Endothelial cell of umbilical vein (primary cell): ENCODE measurements at regions of chr5 and their contacts with region 1.

Region 1: DNA sequence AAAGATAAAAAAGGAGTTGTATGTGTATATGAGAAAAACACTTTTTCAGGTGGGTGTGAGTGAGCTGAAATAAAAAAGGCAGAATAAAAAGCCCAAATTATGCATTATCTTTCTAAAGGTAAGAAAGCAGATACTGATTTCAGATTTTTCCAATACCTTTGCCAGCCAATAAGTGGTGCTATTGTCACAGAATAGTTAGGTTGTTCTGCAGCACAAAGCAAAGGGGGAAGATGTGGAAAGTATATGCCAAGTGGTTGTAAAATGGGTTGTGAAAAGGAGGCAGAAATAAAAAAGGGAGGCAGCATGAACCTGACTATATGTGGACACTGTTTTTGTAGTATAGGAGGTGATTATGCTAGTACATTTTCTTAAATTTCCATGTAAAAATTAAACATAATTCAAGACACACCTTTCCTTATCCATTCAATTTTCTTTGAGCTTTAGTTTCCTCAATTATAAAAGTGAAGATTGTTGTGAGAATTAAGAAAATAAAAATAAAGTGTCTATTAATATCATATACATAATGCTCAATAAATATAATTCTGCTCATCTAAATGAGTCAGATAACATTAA is 106.7 kb downstream of the SMIM15 start:
- DNase-seq: peak; percentile 66
- H3K4me3 ChIP-seq: no peak overlapping the region
- H3K27ac ChIP-seq: no peak overlapping the region
- H3K4me1 ChIP-seq: peaks cover 13% of the 10 kb centered on the region
- H3K27me3 ChIP-seq: no peaks in the 10 kb centered on the region
- CTCF ChIP-seq: peak; percentile 50 to 54
- POLR2A ChIP-seq: no peak

Region 2: DNA sequence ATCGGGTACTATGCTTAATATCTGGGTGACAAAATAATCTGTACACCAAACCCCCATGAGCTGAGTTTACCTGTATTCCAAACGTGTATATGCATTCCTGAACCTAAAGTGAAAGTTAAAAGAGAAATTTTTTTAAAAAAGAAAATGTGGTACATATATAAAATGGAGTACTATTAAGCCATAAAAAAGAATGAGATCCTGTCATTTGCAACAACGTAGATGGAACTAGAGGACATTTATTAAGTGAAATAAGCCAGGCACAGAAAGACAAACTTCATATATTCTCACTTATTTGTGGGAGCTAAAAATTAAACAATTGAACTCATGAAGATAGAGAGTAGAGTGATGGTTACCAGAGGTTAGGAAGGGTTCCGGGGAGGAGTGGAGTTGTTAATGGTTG is 65.7 kb before region 1 on chr5:
- CTCF ChIA-PET with region 1: no interaction called
- POLR2A ChIA-PET with region 1: no interaction called
- dilution Hi-C with region 1: no loop called
- intact Hi-C with region 1: no loop called
- DNase-seq: no peak
- H3K4me3 ChIP-seq: no peak overlapping the region
- H3K27ac ChIP-seq: no peak overlapping the region
- H3K4me1 ChIP-seq: no peaks in the 10 kb centered on the region
- H3K27me3 ChIP-seq: no peaks in the 10 kb centered on the region
- CTCF ChIP-seq: no peak
- POLR2A ChIP-seq: no peak

Region 3: GRCh38 chr5:61000887-61001286 is 54.6 kb before region 1 on chr5:
- CTCF ChIA-PET with region 1: no interaction called
- POLR2A ChIA-PET with region 1: no interaction called
- dilution Hi-C with region 1: no loop called
- intact Hi-C with region 1: no loop called
- DNase-seq: no peak
- H3K4me3 ChIP-seq: no peak overlapping the region
- H3K27ac ChIP-seq: no peak overlapping the region
- H3K4me1 ChIP-seq: peaks cover 15% of the 10 kb centered on the region
- H3K27me3 ChIP-seq: no peaks in the 10 kb centered on the region
- CTCF ChIP-seq: no peak
- POLR2A ChIP-seq: no peak

Region 4: GRCh38 chr5:61115968-61116367 is 60.4 kb after region 1 on chr5:
- CTCF ChIA-PET with region 1: no interaction called
- POLR2A ChIA-PET with region 1: no interaction called
- dilution Hi-C with region 1: no loop called
- intact Hi-C with region 1: no loop called
- DNase-seq: no peak
- H3K4me3 ChIP-seq: no peak overlapping the region
- H3K27ac ChIP-seq: no peak overlapping the region
- H3K4me1 ChIP-seq: no peaks in the 10 kb centered on the region
- H3K27me3 ChIP-seq: no peaks in the 10 kb centered on the region
- CTCF ChIP-seq: no peak
- POLR2A ChIP-seq: no peak

Region 5: GRCh38 chr5:61162010-61162831 is 106.7 kb after region 1 on chr5 and contains the start of gene SMIM15:
- CTCF ChIA-PET with region 1: interaction called, 4 read pairs
- POLR2A ChIA-PET with region 1: no interaction called
- dilution Hi-C with region 1: no loop called
- intact Hi-C with region 1: loop called (anchors 2 kb)
- DNase-seq: peak; percentile 82
- H3K4me3 ChIP-seq: peak within 1 kb of the TSS; percentile 22 to 70 (median 67)
- H3K27ac ChIP-seq: peak within 1 kb of the TSS; percentile 72
- H3K4me1 ChIP-seq: peaks cover 15% of the 10 kb centered on the region
- H3K27me3 ChIP-seq: no peaks in the 10 kb centered on the region
- CTCF ChIP-seq: no peak
- POLR2A ChIP-seq: peak; percentile 61
- total RNA-seq, gene SMIM15: 48.8 and 54.5 TPM in 2 replicates

Region 6: DNA sequence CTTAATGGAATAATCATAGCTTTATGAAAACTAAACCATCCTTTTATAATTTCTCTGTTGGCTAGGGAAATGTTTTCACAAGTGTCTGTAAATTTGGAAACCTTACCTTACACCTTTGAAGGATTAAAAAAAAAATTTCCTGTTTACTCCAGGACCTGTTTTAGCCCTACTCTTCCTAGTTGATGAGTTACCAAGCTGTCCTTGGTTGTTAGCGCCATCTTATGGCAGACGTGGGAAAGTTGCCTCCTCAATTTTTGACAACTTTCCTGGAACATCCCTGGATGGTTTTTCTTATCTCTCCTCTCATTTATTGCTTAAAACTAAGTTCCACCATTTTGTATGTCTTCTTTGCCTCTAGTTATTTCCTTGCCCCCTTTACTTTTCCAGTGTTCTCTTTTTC is 302.2 kb after region 1 on chr5:
- CTCF ChIA-PET with region 1: no interaction called
- POLR2A ChIA-PET with region 1: no interaction called
- dilution Hi-C with region 1: no loop called
- intact Hi-C with region 1: loop called (anchors 1 kb)
- DNase-seq: no peak
- H3K4me3 ChIP-seq: no peak overlapping the region
- H3K27ac ChIP-seq: no peak overlapping the region
- H3K4me1 ChIP-seq: peaks cover 3% of the 10 kb centered on the region
- H3K27me3 ChIP-seq: no peaks in the 10 kb centered on the region
- CTCF ChIP-seq: peak in 1 of 2 donors; percentile 28
- POLR2A ChIP-seq: no peak

Region 7: GRCh38 chr5:61817472-61818326 is 762.2 kb after region 1 on chr5:
- CTCF ChIA-PET with region 1: interaction called, 5 read pairs
- POLR2A ChIA-PET with region 1: no interaction called
- dilution Hi-C with region 1: no loop called
- intact Hi-C with region 1: loop called (anchors 1 kb)
- DNase-seq: peak; percentile 61
- H3K4me3 ChIP-seq: no peak overlapping the region
- H3K27ac ChIP-seq: no peak overlapping the region
- H3K4me1 ChIP-seq: no peaks in the 10 kb centered on the region
- H3K27me3 ChIP-seq: peaks cover 9 to 12% of the 10 kb centered on the region in 2 experiments
- CTCF ChIP-seq: peak; percentile 47 to 58
- POLR2A ChIP-seq: no peak

Region 8: DNA sequence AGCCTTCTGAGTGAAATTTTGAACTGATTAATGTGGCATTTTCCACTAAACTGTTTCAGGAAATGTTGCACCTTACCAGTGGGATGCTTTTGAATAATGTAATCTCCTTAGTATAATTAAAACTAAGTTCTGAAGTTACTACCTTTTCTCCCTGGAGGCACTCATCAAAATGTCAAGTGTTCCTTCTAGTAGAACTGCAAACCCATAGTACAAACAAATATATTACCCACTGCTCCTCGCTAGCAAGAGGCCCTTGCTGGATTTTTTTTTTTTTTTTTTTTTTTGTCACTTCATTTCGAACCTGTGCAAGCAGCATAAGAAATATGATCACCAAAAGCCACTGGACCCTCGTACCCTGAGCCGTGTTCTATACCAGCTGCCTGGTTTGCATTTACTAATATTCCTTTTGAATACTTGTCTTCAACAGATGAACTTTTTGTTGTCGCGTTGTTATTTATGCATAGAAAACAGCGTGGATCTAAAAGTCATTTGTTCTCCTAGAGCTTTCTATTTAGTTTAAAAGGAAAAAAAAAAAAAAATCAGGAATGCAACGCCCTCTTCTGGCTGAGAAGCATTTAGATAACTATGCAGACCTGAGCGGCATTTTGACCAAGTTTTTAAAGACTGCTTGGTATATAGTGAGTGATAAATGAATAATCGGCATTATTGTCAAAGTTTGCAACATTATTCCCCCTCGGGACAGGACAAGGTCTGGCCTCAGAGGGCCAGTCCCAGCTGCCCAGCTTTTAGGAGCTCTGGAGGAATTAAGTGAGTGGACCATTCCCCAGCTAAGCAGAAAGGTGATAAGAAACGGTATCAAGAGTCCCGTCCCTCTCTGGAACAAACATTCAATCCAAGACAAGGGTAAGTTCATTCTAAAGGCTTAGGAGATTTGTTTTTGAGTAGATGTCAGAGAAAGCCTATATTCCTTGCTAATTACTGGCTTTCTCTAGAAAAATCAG is 1088.0 kb after region 1 on chr5:
- CTCF ChIA-PET with region 1: interaction called, 13 read pairs
- POLR2A ChIA-PET with region 1: no interaction called
- dilution Hi-C with region 1: no loop called
- intact Hi-C with region 1: loop called (anchors 5 kb)
- DNase-seq: peak; percentile 33
- H3K4me3 ChIP-seq: no peak overlapping the region
- H3K27ac ChIP-seq: no peak overlapping the region
- H3K4me1 ChIP-seq: peaks cover 3% of the 10 kb centered on the region
- H3K27me3 ChIP-seq: peaks cover 13 to 33% of the 10 kb centered on the region in 2 experiments
- CTCF ChIP-seq: peak; percentile 41 to 47
- POLR2A ChIP-seq: no peak